ENCODE measurements at regions of chr18 and their contacts with region 1.

Region 1: DNA sequence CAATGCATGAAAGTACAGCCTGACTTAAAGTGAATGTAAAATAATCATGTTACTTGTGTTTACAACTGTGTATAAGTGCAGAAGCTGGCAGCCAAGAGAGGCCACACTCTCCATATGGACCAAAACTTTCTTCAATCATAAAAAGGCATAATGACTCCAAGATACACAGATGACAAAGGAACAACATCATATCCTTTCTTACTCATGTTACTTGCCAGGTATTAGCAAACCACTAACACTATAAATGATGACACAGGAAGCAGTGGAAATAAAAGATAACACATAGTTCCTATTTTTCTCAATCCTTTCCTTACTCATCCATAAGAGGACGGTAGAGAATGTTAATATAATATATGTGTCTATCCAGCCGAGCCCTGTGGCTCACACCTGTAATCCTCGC is 400.0 kb upstream of the CDH2 start:
- DNase-seq: no peak
- ATAC-seq: no peak
- H3K4me3 ChIP-seq: no peak overlapping the region
- H3K4me3 Mint-ChIP-seq: no peak overlapping the region
- H3K27ac ChIP-seq: no peak overlapping the region
- H3K27ac Mint-ChIP-seq: no peak overlapping the region
- H3K4me1 ChIP-seq: no peaks in the 10 kb centered on the region
- H3K4me1 Mint-ChIP-seq: no peaks in the 10 kb centered on the region
- H3K27me3 ChIP-seq: no peaks in the 10 kb centered on the region
- H3K27me3 Mint-ChIP-seq: no peaks in the 10 kb centered on the region
- CTCF ChIP-seq: no peak

Region 2: GRCh38 chr18:28637897-28638296 is 61.0 kb after region 1 on chr18:
- intact Hi-C with region 1: loop called (anchors 10 kb)
- DNase-seq: no peak
- ATAC-seq: no peak
- H3K4me3 ChIP-seq: no peak overlapping the region
- H3K4me3 Mint-ChIP-seq: no peak overlapping the region
- H3K27ac ChIP-seq: no peak overlapping the region
- H3K27ac Mint-ChIP-seq: no peak overlapping the region
- H3K4me1 ChIP-seq: no peaks in the 10 kb centered on the region
- H3K4me1 Mint-ChIP-seq: no peaks in the 10 kb centered on the region
- H3K27me3 ChIP-seq: no peaks in the 10 kb centered on the region
- H3K27me3 Mint-ChIP-seq: no peaks in the 10 kb centered on the region
- CTCF ChIP-seq: no peak

Region 3: DNA sequence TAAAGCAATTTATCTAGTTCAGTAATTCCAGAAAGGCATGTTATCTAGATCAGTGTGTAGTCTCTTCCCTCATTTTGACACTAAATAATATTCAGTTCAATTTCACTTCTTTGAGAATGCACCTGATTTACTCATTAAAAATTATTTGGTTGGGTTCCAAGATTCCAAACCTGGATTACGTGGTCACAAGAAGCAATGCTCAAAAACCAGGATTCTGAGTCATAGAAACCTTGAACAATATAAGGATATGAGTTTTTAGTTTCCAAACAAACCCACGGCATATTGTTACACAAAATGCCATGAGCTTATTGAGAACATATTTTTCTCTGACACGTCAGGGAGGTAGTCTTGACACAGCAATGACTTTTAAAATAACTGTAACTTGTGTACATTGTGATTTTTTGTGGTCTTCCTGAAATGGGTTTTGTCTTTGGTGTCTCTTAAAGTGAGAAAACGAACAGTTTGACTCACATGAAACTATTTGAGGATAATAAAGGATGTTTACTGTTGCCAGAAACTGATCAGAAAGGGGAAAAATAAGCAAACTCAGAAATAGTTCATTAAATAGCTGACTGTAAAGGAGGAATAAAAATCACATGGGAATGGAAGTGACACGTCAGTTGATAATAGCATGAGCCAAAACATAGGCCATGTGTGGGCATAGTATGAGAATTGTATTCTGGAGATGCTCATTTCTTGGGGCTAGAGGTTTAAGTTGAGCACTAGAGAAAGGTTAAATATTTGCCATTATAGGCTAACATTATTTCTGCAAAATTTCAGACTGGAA is 217.7 kb after region 1 on chr18:
- intact Hi-C with region 1: no loop called
- DNase-seq: no peak
- ATAC-seq: no peak
- H3K4me3 ChIP-seq: no peak overlapping the region
- H3K4me3 Mint-ChIP-seq: no peak overlapping the region
- H3K27ac ChIP-seq: no peak overlapping the region
- H3K27ac Mint-ChIP-seq: peak overlapping the region in 1 of 2 donors; percentile 17
- H3K4me1 ChIP-seq: no peaks in the 10 kb centered on the region
- H3K4me1 Mint-ChIP-seq: peaks cover 28 to 30% of the 10 kb centered on the region in 2 donors
- H3K27me3 ChIP-seq: no peaks in the 10 kb centered on the region
- H3K27me3 Mint-ChIP-seq: no peaks in the 10 kb centered on the region
- CTCF ChIP-seq: no peak